CD4-positive, alpha-beta memory T cell (primary cell): ENCODE measurements at regions of chr7 and their contacts with region 1.

Region 1: DNA sequence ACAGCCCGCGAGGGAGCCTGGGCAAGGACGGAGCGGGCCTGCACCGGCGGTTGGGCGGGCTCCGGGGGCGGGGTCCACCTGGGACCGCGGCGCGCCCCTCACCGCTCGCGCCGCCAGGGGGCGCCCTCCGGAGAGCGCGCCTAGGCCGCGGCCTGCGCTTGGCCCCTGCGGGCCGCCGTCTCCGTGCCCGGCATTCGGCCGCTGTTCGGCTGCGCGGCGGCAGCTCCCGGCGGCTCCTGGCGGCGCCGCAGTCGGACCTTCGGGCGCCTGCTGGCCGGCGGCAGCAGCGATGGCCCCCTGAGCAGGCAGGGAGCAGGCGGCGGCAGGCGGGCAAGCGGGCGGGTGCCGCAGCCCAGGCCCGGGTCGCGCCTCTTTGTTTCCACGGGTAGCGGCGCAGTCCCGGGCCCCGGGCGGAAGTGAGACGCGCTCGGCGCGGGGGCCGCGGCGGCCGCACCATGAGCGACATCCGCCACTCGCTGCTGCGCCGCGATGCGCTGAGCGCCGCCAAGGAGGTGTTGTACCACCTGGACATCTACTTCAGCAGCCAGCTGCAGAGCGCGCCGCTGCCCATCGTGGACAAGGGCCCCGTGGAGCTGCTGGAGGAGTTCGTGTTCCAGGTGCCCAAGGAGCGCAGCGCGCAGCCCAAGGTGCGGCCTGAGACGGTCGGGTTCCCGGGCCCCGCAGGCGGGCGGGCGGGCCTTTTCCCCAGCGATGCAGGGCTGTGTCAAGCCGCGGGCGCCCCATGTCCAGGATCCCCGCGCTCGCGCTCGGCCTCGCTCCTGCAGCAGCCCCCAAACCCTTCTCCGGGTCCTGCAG is at the start of gene INTS15:
- DNase-seq: peak; percentile 81 to 93 (median 89)
- H3K4me3 ChIP-seq: peak within 1 kb of the TSS; percentile 34 to 92
- H3K4me3 Mint-ChIP-seq: peak within 1 kb of the TSS; percentile 89 to 93 (median 91)
- H3K27ac ChIP-seq: peak within 1 kb of the TSS; percentile 72
- H3K27ac Mint-ChIP-seq: peak within 1 kb of the TSS; percentile 89 to 98 (median 94)
- H3K4me1 ChIP-seq: peaks cover 23% of the 10 kb centered on the region
- H3K4me1 Mint-ChIP-seq: peaks cover 11 to 42% (median 20%) of the 10 kb centered on the region in 4 donors
- H3K27me3 ChIP-seq: no peaks in the 10 kb centered on the region
- H3K27me3 Mint-ChIP-seq: no peaks in the 10 kb centered on the region
- total RNA-seq, gene INTS15: 56.6 to 62.1 TPM

Region 2: DNA sequence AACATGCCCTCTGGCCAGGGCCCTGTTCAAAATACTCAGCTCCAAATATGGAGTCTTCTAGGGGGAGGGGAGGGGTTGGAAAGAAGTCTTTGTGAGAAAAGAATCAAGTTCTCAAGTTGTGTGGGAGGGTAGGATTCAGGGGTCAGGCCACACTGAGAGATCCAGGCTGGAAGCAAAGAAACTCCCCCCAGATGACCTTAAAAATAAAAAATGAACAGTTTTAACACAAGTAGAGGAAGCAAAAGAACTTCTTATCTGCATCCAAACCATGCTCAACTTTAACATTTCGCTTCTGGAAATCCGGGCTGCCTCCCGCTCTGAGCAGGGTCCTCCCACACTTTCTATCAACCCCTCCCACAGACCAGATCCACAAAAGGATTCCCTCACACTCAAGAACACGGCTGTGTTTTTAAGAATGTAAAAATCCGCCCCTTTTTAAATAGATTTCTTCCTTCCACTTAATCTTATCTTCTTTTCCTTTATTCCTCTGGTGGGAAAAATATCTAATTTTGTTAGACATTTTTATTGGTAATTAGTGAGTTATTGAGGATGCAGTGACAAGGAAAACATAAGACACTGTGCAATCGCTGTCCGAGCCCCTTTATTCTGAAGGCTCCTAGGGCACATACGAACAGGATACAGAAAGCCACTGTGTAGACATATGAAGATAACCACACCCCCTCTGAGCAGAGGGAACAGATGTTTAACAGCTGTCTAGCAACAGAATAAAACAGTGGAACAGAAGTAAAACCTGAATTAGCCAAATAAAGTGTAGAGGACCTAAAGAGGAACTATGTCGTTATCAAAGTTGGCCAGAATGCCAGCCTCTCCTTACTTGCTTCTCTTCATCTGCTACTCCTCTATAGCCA is 361.4 kb before region 1 on chr7:
- CTCF ChIA-PET with region 1: no interaction called
- POLR2A ChIA-PET with region 1: no interaction called
- intact Hi-C with region 1: no loop called
- DNase-seq: no peak
- H3K4me3 ChIP-seq: no peak overlapping the region
- H3K4me3 Mint-ChIP-seq: peak overlapping the region in 2 of 8 donors; percentile 6 to 52
- H3K27ac ChIP-seq: no peak overlapping the region
- H3K27ac Mint-ChIP-seq: peak overlapping the region in 2 of 7 donors; percentile 21 to 57
- H3K4me1 ChIP-seq: peaks cover 18% of the 10 kb centered on the region
- H3K4me1 Mint-ChIP-seq: peaks cover 19 to 42% (median 30%) of the 10 kb centered on the region in 4 donors
- H3K27me3 ChIP-seq: no peaks in the 10 kb centered on the region
- H3K27me3 Mint-ChIP-seq: peaks cover 0 to 4% of the 10 kb centered on the region in 2 donors

Region 3: GRCh38 chr7:6476596-6477299 is 113.3 kb before region 1 on chr7:
- CTCF ChIA-PET with region 1: no interaction called
- POLR2A ChIA-PET with region 1: no interaction called
- intact Hi-C with region 1: no loop called
- DNase-seq: no peak
- H3K4me3 ChIP-seq: no peak overlapping the region
- H3K4me3 Mint-ChIP-seq: peak overlapping the region in 1 of 8 donors; percentile 20
- H3K27ac ChIP-seq: no peak overlapping the region
- H3K27ac Mint-ChIP-seq: peak overlapping the region in 5 of 7 donors; percentile 18 to 67 (median 46)
- H3K4me1 ChIP-seq: peaks cover 45% of the 10 kb centered on the region
- H3K4me1 Mint-ChIP-seq: peaks cover 42 to 75% (median 60%) of the 10 kb centered on the region in 4 donors
- H3K27me3 ChIP-seq: no peaks in the 10 kb centered on the region
- H3K27me3 Mint-ChIP-seq: no peaks in the 10 kb centered on the region

Region 4: DNA sequence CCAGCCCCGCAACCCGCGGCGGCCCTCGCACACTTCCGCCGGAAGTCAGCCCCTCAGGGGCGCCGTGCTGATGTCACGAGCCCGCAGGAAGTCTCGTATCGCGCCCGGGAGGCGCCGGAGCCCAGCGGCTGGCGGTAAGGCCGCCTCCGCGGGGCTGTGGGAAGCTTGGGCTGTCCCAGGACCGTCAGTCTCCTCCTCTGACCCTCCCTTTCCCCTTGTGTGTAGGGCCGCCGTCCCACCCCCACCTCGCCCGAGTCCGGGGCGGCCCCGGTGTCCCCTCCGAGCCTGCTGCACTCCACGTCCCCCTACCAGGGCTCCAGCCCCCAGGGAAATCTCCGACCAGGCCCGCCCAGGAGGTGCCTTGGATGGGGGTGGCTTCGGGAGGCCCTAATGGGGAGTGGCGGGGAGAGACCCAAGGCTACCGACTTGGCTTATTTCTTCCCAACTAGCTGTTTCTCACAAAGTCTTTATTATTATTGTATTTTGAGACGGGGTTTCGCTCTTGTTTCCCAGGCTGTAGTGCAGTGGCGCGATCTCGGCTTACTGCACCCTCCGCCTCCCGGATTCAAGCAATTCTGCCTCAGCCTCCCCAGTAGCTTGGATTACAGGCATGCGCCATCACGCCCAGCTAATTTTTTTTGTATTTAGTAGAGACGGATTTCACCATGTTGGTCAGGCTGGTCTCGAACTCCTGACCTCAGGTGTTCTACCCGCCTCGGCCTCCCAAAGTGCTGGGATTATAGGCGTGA is 12.5 kb before region 1 on chr7 and contains the start of gene ZDHHC4:
- CTCF ChIA-PET with region 1: interaction called, 10 read pairs
- POLR2A ChIA-PET with region 1: interaction called, 33 read pairs
- intact Hi-C with region 1: loop called (anchors 1 kb)
- DNase-seq: peak; percentile 81 to 83 (median 81)
- H3K4me3 ChIP-seq: peak within 1 kb of the TSS; percentile 36 to 79
- H3K4me3 Mint-ChIP-seq: peak within 1 kb of the TSS; percentile 86 to 94 (median 89)
- H3K27ac ChIP-seq: peak within 1 kb of the TSS; percentile 84
- H3K27ac Mint-ChIP-seq: peak within 1 kb of the TSS; percentile 88 to 97 (median 94)
- H3K4me1 ChIP-seq: peaks cover 12% of the 10 kb centered on the region
- H3K4me1 Mint-ChIP-seq: peaks cover 5 to 26% (median 7%) of the 10 kb centered on the region in 4 donors
- H3K27me3 ChIP-seq: no peaks in the 10 kb centered on the region
- H3K27me3 Mint-ChIP-seq: no peaks in the 10 kb centered on the region
- total RNA-seq, gene ZDHHC4: 31.6 to 31.9 TPM

Region 5: GRCh38 chr7:6637544-6638229 is 47.6 kb after region 1 on chr7:
- CTCF ChIA-PET with region 1: no interaction called
- POLR2A ChIA-PET with region 1: interaction called, 5 read pairs
- intact Hi-C with region 1: loop called (anchors 1 kb)
- DNase-seq: peak; percentile 45 to 65 (median 50)
- H3K4me3 ChIP-seq: peak overlapping the region in 1 of 2 donors; percentile 38
- H3K4me3 Mint-ChIP-seq: peak overlapping the region; percentile 84 to 90 (median 88)
- H3K27ac ChIP-seq: peak overlapping the region; percentile 56
- H3K27ac Mint-ChIP-seq: peak overlapping the region; percentile 73 to 95 (median 90)
- H3K4me1 ChIP-seq: peaks cover 20% of the 10 kb centered on the region
- H3K4me1 Mint-ChIP-seq: peaks cover 13 to 28% (median 24%) of the 10 kb centered on the region in 4 donors
- H3K27me3 ChIP-seq: no peaks in the 10 kb centered on the region
- H3K27me3 Mint-ChIP-seq: no peaks in the 10 kb centered on the region

Region 6: GRCh38 chr7:6706677-6707544 is 116.9 kb after region 1 on chr7 and contains the start of gene ZNF12:
- CTCF ChIA-PET with region 1: no interaction called
- POLR2A ChIA-PET with region 1: interaction called, 3 read pairs
- intact Hi-C with region 1: loop called (anchors 2 kb)
- DNase-seq: peak; percentile 92 to 94 (median 92)
- H3K4me3 ChIP-seq: peak within 1 kb of the TSS; percentile 59 to 71
- H3K4me3 Mint-ChIP-seq: peak within 1 kb of the TSS; percentile 90 to 96 (median 94)
- H3K27ac ChIP-seq: peak within 1 kb of the TSS; percentile 81
- H3K27ac Mint-ChIP-seq: peak within 1 kb of the TSS; percentile 90 to 95 (median 94)
- H3K4me1 ChIP-seq: peaks cover 39% of the 10 kb centered on the region
- H3K4me1 Mint-ChIP-seq: peaks cover 32 to 50% (median 40%) of the 10 kb centered on the region in 4 donors
- H3K27me3 ChIP-seq: no peaks in the 10 kb centered on the region
- H3K27me3 Mint-ChIP-seq: no peaks in the 10 kb centered on the region
- total RNA-seq, gene ZNF12: 48.0 to 49.6 TPM

Region 7: DNA sequence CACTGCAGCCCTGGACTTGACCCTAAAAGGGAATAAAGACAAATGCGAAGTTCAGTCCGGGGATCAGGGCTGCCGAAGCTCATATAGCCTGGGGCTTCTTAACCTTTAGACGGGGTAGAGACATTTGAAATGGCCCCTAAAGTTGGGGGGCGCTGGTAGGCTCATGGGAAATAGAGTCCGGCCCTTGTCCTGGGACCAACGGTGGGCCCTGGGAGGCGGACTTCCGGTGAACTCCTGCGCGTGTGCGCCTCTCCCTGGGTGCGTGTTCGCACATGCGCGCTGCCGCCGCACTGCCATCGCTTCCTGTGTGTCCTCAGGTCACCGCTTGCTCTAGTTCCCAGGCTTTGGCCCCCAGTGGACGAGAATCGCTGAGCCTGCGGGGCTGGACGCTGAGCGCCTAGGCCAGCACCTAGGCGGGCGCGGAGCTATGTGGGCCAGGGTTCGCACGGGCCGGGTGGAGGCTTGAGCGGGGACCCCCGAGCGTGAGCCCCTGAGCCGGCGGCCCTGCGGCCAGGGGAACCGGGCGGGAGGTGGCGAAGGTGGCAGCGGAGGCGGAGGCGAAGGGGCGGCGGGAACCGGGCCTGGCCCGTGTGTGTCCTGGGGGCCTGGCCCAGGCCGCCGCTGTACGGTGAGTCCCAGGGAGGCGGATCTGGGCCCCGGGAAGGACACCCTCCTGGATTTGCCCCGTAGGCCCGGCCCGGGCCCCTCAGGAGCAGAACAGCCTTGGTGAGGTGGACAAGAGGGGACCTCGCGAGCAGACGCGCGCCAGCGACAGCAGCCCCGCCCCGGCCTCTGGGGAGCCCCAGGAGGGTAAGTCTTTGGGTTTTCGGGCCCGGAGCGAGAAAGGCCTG is 139.7 kb after region 1 on chr7:
- CTCF ChIA-PET with region 1: no interaction called
- POLR2A ChIA-PET with region 1: no interaction called
- intact Hi-C with region 1: loop called (anchors 5 kb)
- DNase-seq: peak; percentile 74 to 78 (median 76)
- H3K4me3 ChIP-seq: peak overlapping the region; percentile 76 to 85
- H3K4me3 Mint-ChIP-seq: peak overlapping the region; percentile 90 to 96 (median 94)
- H3K27ac ChIP-seq: peak overlapping the region; percentile 87
- H3K27ac Mint-ChIP-seq: peak overlapping the region; percentile 83 to 95 (median 93)
- H3K4me1 ChIP-seq: peaks cover 11% of the 10 kb centered on the region
- H3K4me1 Mint-ChIP-seq: peaks cover 14 to 40% (median 27%) of the 10 kb centered on the region in 4 donors
- H3K27me3 ChIP-seq: no peaks in the 10 kb centered on the region
- H3K27me3 Mint-ChIP-seq: no peaks in the 10 kb centered on the region